Activated naive CD8-positive, alpha-beta T cell treated with anti-CD3 and anti-CD28 coated beads, Interleukin-2, amount 10 ng/mL, durations not matched to agents 7 days and 5 days (primary cell): ENCODE measurements at regions of chr15 and their contacts with region 1.

Region 1: DNA sequence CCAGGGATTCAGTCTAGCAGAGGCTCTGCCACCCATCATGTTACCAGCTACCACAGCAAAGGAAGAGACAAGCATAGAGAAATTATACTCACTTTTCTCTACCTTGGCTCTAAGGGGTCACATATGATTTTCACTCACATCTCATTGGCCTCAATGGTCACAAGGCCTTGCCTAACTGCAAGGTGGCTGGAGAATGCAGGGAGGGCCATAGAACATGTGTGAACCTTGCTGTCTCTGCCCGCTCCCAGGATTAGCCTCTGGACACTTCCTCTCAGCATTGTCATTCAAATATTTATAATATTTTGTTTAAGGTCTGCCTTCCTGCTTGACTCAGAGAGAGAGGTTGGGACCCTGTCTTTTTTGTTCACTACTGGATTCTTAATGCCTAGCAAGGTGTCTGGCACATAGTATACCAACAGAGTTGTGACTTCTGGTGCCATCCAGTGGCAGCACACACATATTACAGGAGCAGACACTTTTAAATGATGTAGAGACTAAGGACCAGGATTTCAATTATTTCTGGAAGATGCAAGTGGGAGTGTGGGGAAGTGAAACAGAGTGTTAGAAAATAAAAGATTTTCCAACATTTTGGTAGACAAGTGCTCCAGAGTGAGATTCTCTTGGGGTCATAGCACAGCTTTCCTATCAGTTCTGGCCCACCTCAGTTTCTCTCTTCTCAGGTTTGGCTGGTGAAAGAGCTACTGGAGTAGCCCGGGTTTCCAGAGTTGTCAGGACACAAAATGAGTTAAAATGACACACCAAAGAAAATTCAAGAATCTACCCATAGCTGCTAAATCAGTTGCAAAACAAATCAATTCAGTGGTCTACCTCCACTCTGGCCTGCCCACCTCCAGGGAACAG is 119.0 kb upstream of the RASGRP1 start:
- DNase-seq: peak; percentile 66
- ATAC-seq: peak; percentile 44
- H3K4me3 Mint-ChIP-seq: peak overlapping the region; percentile 74
- H3K27ac Mint-ChIP-seq: peak overlapping the region; percentile 95
- H3K4me1 Mint-ChIP-seq: peaks cover 62% of the 10 kb centered on the region
- H3K27me3 Mint-ChIP-seq: no peaks in the 10 kb centered on the region

Region 2: DNA sequence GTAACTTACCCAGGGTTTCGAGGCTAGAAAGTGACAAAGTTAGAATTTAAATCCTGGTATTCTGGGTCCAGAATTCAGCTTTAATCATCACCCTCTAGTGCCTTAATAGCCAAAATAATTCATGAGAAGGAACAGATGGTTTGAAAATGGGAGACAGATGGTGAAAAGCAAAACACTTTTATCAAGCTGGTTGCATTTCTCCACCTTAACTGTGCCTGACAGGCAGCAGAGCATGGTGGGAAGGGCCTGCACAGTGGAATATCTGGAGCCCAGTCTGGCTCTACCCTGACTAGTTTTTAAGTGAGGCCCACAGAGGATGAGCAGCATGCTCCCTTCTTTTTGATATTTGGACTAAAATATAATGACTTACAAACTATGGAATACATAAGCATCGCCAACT is 83.4 kb before region 1 on chr15:
- POLR2A ChIA-PET with region 1: no interaction called
- DNase-seq: no peak
- ATAC-seq: no peak
- H3K4me3 Mint-ChIP-seq: no peak overlapping the region
- H3K27ac Mint-ChIP-seq: no peak overlapping the region
- H3K4me1 Mint-ChIP-seq: peaks cover 9% of the 10 kb centered on the region
- H3K27me3 Mint-ChIP-seq: peaks cover 2% of the 10 kb centered on the region

Region 3: DNA sequence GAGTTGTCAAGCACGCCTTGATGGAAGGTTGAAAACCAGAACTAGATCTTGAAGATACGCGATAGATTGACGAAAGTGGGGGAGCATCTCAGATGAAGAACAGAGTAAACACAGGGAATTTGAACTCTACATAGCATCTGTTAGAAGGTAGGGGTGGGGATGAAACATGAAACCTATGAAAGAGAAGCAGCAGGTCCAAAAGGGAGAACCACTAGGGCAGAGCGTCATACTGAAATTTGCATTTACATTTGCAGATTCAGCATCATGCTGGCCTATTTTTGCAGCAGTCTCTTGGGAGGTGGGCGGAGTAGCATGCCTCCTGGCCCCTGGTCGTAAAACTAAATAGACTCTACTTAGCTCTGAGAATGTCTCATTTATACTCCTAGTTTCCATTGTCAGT is 72.9 kb before region 1 on chr15:
- POLR2A ChIA-PET with region 1: interaction called, 12 read pairs
- DNase-seq: no peak
- ATAC-seq: peak; percentile 71
- H3K4me3 Mint-ChIP-seq: peak overlapping the region; percentile 80
- H3K27ac Mint-ChIP-seq: peak overlapping the region; percentile 97
- H3K4me1 Mint-ChIP-seq: peaks cover 64% of the 10 kb centered on the region
- H3K27me3 Mint-ChIP-seq: no peaks in the 10 kb centered on the region

Region 4: DNA sequence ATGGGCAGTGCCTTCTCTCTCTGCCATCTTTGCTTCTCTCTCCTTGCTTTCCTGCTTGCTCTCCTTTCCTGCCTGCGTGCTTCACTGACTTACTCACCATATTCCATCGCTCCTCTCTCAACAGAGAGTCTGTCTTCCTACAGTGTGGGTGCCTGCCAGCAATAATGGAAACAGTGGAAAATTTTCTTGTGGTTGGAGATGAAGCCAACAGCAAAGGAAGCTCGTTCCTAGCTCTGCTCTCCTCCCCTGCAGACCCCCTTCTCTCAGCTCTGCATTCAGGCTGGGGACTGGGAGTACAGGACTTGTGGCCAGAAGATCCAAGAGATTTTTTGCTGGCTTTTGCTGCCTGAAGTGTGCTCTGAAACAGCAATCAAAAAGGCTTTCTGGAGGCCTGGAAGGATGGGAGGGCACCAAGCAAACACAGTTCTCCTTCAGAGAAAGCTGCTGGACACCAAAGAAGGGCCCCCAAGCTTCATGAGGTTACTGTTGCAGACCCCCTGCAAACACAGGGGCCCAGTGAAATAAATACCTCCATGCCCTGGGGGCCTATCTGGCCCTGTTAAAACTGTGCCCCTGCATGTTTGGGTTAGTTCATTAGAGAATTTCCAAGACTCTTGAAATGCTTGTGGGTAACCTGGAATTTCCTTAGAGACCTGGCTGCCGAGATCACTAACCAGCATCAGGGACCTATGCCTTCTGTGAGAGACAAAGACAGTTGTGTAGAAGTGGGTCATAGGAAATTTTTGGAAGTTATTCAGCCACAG is 30.9 kb after region 1 on chr15:
- POLR2A ChIA-PET with region 1: no interaction called
- DNase-seq: no peak
- ATAC-seq: no peak
- H3K4me3 Mint-ChIP-seq: no peak overlapping the region
- H3K27ac Mint-ChIP-seq: no peak overlapping the region
- H3K4me1 Mint-ChIP-seq: no peaks in the 10 kb centered on the region
- H3K27me3 Mint-ChIP-seq: peaks cover 18% of the 10 kb centered on the region

Region 5: GRCh38 chr15:38768970-38769369 is 85.4 kb after region 1 on chr15:
- POLR2A ChIA-PET with region 1: no interaction called
- DNase-seq: no peak
- ATAC-seq: no peak
- H3K4me3 Mint-ChIP-seq: no peak overlapping the region
- H3K27ac Mint-ChIP-seq: no peak overlapping the region
- H3K4me1 Mint-ChIP-seq: no peaks in the 10 kb centered on the region
- H3K27me3 Mint-ChIP-seq: peaks cover 6% of the 10 kb centered on the region